Right ventricle myocardium inferior (tissue), 1 donor: ENCODE measurements at regions of chr4 and their contacts with region 1.

Region 1: DNA sequence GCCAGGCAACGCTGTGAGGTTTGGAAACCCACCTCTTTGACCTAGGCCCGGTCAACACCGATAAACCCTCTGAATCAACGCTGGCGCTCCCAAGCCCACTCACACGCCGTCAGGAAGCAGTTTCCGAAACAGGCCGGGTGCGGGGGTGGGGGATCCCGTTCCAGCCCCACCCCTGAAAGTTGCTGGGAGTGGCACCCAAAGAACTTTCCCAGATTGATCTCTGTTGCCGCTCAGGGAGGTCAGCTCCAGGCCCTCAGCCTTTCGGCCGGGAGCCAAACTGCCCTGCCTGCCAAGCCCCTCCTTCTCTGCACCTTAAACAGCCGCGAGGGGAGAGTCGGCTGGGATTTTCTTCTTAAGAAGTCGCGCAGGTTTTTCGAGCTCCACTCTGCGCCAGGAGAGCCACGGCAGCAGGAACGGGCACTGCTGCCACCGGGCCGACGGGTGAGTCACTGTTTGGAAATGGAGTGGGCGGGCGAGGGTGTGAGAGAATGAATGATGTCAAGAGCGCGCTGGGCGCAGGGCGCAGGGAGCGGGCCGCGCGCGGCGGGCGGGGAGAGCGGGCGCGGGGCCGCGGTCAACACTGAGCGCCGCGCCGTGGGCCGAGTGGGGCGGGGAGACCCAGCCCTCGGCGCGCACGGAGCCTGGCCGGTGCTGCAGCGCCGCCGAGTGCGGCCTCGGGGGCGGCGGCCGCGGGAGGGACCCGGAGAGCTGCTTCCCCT is at the start of gene SGMS2:
- DNase-seq: peak; percentile 93
- ATAC-seq: peak; percentile 95
- total RNA-seq, gene SGMS2: 23.2 TPM

Region 2: DNA sequence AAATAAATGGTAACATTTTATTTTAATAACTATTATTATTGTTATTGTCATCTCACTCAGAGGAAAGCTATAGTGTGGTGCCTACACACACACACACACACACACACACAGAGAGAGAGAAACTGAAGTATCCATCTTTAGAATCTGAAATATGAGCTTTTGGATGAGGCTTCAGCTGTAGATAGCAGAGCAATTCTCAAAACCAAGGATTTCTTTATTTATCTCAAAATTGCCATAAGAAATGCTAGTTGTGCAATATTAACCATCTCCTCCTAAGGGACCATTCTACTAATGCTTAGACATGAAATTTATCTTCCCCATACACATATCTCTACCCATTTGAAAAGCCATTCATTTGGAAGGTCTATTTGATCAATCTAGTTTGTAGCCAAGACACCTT is 49.8 kb before region 1 on chr4:
- intact Hi-C with region 1: no loop called
- DNase-seq: no peak
- ATAC-seq: no peak

Region 3: GRCh38 chr4:107863850-107864371 is 39.4 kb after region 1 on chr4:
- intact Hi-C with region 1: loop called (anchors 5 kb)
- DNase-seq: peak; percentile 69
- ATAC-seq: peak; percentile 86

Region 4: DNA sequence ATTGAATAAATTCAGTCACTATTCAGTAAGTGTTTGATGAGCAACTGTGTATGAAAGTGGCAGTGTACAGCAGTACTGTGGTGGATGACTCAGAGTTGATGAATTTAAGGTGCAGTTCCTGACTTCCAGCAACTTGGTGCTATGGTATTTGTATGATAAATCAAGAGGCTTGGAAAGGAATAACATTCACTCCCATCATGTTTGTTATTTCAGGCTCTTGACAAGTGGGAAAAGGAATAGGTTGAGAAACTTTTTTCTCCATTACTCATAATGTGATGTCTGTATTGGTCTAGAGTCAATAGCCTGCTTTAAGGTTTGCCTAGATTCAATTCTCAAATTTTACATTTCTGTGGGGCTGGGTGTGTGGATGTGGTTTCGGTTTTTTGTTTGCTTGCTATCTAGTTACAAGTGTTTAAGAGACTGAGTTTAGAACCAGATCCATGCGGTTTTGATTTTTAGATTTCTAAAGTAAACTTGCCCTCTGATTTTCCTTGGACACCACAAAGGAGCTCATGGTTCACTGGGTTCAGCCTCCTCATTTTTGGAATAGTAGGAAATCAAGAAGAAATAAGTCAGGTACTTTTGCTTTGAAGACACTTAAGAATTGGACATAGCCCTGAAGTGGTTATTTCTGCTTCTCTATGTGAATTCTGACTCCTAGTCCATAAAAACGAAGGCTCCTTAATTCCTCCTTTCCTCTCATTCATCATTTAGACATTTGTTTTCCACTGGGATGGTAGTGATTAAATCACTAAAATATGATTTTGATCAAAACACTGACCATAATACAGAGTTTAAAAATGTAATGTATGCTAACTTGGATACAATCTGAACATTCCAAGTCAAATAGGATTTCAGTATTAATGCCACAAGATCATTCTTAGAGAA is 71.9 kb after region 1 on chr4:
- intact Hi-C with region 1: loop called (anchors 5 kb)
- DNase-seq: no peak
- ATAC-seq: no peak

Region 5: GRCh38 chr4:107913281-107913899 is 88.9 kb after region 1 on chr4:
- intact Hi-C with region 1: loop called (anchors 2 kb)
- DNase-seq: no peak
- ATAC-seq: peak; percentile 79